IMR-90 (cell line): ENCODE measurements at regions of chr2 and their contacts with region 1.

Region 1: DNA sequence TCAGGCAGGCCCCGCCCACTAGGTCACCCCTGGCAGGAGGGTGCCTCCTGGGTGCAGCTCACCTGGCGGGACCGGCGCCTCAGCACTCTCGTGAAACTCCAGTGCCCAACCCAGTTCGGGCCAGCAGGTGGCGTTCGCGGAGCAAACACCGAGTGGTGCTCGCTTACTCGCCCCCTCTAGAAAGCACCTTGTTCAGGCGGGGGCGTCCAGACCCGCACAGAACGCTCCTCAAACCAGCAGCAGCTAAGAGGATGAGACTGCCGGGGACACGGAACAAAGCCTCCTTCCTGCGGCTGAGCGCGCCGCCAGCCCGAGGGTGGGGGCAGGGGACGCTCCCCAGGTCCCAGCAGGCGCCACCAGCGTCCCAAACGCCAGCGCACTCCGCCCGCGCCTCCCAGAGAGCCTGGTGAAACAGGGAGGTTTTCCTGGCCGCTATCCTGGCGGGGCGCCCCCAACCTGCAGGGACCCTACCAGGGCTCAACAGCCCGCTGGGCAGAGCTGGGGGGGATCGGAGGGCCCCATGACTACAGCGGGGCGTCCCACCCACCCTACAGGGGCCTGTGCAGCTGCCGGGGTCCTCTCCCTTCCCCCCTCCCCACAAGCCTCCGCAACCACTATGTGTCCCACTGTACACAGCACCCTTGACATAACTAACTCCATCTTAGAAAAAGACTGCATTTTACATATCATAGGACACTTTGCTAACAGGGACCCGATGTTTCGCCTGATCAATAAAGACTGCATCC is 44.7 kb downstream of the MRPS5 start:
- DNase-seq: peak; percentile 39
- ATAC-seq: peak; percentile 88
- H3K4me3 ChIP-seq: peak overlapping the region; percentile 36
- H3K27ac ChIP-seq: no peak overlapping the region
- H3K4me1 ChIP-seq: no peaks in the 10 kb centered on the region
- H3K27me3 ChIP-seq: peaks cover 44% of the 10 kb centered on the region
- CTCF ChIP-seq: peak; percentile 65
- POLR2A ChIP-seq: no peak
- RAD21 ChIP-seq: peak; percentile 40

Region 2: DNA sequence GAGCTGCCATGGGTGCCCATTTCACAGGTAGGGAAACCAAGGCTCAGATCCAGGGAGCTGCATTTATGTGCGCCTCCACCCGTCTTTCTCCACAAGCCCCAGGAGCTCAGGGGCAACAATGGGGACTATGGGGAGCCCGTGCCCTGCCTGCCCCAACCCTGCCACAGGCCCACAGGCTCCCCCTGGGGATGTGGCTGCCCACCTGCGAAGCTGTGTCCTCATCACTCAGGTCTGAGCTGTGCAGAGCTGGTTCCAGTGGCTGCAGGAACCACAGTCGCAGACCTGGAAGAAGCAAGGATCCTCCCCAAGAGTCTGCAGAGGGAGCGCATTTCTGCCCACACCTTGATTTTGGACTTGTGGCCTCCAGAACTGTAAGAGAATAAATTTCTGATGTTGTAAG is 195.9 kb before region 1 on chr2:
- CTCF ChIA-PET with region 1: no interaction called
- POLR2A ChIA-PET with region 1: no interaction called
- dilution Hi-C with region 1: no loop called
- in situ Hi-C with region 1: no loop called
- intact Hi-C with region 1: no loop called
- DNase-seq: no peak
- ATAC-seq: no peak
- H3K4me3 ChIP-seq: no peak overlapping the region
- H3K27ac ChIP-seq: no peak overlapping the region
- H3K4me1 ChIP-seq: no peaks in the 10 kb centered on the region
- H3K27me3 ChIP-seq: no peaks in the 10 kb centered on the region
- CTCF ChIP-seq: no peak
- POLR2A ChIP-seq: no peak
- RAD21 ChIP-seq: no peak

Region 3: GRCh38 chr2:94956797-94957391 is 120.1 kb before region 1 on chr2:
- CTCF ChIA-PET with region 1: no interaction called
- POLR2A ChIA-PET with region 1: no interaction called
- dilution Hi-C with region 1: no loop called
- in situ Hi-C with region 1: no loop called
- intact Hi-C with region 1: no loop called
- DNase-seq: peak; percentile 15
- ATAC-seq: peak; percentile 93
- H3K4me3 ChIP-seq: no peak overlapping the region
- H3K27ac ChIP-seq: no peak overlapping the region
- H3K4me1 ChIP-seq: no peaks in the 10 kb centered on the region
- H3K27me3 ChIP-seq: peaks cover 4% of the 10 kb centered on the region; the same call in 1 of the 2 replicates
- CTCF ChIP-seq: peak; percentile 76
- POLR2A ChIP-seq: no peak
- RAD21 ChIP-seq: peak; percentile 49

Region 4: DNA sequence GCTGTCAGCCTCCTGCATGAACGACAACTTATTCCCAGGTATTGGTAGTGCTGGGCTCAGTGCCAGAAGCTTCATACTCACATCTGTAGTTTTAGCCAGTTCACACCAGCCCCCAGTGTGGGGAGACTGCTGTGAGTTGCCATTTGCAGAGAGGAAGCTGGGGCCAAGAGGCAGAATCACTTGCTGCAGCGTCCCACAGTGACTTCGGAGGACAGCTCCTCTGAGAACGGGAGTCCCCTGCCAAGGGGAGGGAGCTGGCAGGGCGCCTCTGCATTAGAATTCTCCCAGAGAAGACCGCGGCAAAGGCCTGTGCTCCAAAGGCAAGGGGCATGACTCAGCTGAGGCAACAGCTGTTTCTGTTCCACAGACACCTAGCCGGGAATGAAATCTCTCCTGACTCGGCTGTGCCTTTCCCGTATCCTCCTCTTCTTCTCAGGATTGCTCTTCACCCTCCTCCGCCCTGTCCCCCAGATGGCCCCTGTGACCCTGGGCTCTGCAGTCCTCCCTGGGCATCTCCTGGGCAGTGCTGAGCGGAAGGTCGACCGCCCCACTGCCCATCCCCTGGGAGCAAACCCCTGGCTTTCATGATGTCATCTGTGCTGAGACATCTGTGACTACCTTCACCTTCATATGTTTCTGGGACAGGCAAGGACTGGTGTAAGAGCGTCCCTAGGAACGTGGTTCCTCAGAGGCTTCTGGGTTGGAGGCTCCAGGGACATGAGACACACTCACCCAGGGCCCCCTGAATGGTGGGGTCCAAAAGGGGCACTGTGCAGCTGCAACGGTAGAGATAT is 33.5 kb before region 1 on chr2:
- CTCF ChIA-PET with region 1: no interaction called
- POLR2A ChIA-PET with region 1: no interaction called
- dilution Hi-C with region 1: no loop called
- in situ Hi-C with region 1: no loop called
- intact Hi-C with region 1: no loop called
- DNase-seq: peak; percentile 90
- ATAC-seq: peak; percentile 93
- H3K4me3 ChIP-seq: no peak overlapping the region
- H3K27ac ChIP-seq: peak overlapping the region; percentile 59; the same call in 1 of the 2 replicates
- H3K4me1 ChIP-seq: peaks cover 14% of the 10 kb centered on the region
- H3K27me3 ChIP-seq: peaks cover 3% of the 10 kb centered on the region; the same call in 1 of the 2 replicates
- CTCF ChIP-seq: no peak
- POLR2A ChIP-seq: no peak
- RAD21 ChIP-seq: no peak

Region 5: GRCh38 chr2:95062242-95063085 is 14.5 kb before region 1 on chr2:
- CTCF ChIA-PET with region 1: interaction called, 11 read pairs
- POLR2A ChIA-PET with region 1: no interaction called
- dilution Hi-C with region 1: no loop called
- in situ Hi-C with region 1: no loop called
- intact Hi-C with region 1: no loop called
- DNase-seq: no peak
- ATAC-seq: no peak
- H3K4me3 ChIP-seq: no peak overlapping the region
- H3K27ac ChIP-seq: no peak overlapping the region
- H3K4me1 ChIP-seq: no peaks in the 10 kb centered on the region
- H3K27me3 ChIP-seq: peaks cover 31% of the 10 kb centered on the region
- CTCF ChIP-seq: no peak
- POLR2A ChIP-seq: no peak
- RAD21 ChIP-seq: no peak